ENCODE measurements at regions of chr13 and their contacts with region 1.

Region 1: GRCh38 chr13:20049558-20050473 is 91.3 kb downstream of the ZMYM2 start:
- DNase-seq: no peak
- H3K4me3 Mint-ChIP-seq: peak overlapping the region; percentile 37
- H3K27ac Mint-ChIP-seq: peak overlapping the region; percentile 26
- H3K4me1 Mint-ChIP-seq: peaks cover 22% of the 10 kb centered on the region
- H3K27me3 Mint-ChIP-seq: no peaks in the 10 kb centered on the region

Region 2: DNA sequence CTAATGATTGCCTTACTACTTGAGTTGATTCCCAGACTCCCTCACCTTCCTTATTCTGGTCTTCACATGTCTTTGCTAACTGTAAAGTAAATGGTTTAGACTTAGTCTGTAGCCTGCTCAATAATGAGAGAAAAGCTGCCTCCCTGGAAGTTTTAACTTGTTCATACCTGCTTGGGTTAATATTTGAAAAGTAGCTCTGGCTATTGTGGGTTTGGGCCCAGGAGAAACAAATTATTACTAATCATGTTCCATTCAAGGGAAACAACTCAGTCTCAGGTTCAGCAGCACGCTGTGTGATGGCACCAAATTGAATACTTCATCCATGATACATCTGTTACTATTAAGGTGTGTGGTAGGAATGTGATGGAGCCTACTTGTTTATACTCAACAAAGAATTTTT is 16.3 kb before region 1 on chr13:
- CTCF ChIA-PET with region 1: no interaction called
- intact Hi-C with region 1: loop called (anchors 2 kb)
- DNase-seq: no peak
- H3K4me3 Mint-ChIP-seq: no peak overlapping the region
- H3K27ac Mint-ChIP-seq: no peak overlapping the region
- H3K4me1 Mint-ChIP-seq: no peaks in the 10 kb centered on the region
- H3K27me3 Mint-ChIP-seq: no peaks in the 10 kb centered on the region

Region 3: DNA sequence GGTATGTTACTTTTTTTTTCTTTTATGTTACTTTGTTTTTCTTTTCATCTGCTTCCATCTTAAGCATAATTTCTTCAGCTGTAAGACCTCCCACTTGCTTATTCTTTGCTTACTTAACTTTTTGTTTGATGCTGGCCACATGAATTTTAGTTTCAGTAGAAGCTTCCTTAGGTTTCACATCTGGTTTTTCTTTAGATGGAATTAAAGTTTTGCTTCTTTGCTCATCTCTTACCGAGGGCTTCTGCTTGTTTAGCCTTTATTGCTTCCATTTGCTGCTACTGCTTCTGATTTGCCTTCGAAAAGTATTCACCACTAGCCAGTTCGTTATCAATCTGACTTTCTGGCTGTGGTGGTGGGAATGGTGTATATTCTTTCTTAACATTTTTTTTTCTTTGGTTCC is 20.1 kb after region 1 on chr13:
- CTCF ChIA-PET with region 1: no interaction called
- intact Hi-C with region 1: loop called (anchors 2 kb)
- DNase-seq: no peak
- H3K4me3 Mint-ChIP-seq: no peak overlapping the region
- H3K27ac Mint-ChIP-seq: no peak overlapping the region
- H3K4me1 Mint-ChIP-seq: no peaks in the 10 kb centered on the region
- H3K27me3 Mint-ChIP-seq: no peaks in the 10 kb centered on the region

Region 4: DNA sequence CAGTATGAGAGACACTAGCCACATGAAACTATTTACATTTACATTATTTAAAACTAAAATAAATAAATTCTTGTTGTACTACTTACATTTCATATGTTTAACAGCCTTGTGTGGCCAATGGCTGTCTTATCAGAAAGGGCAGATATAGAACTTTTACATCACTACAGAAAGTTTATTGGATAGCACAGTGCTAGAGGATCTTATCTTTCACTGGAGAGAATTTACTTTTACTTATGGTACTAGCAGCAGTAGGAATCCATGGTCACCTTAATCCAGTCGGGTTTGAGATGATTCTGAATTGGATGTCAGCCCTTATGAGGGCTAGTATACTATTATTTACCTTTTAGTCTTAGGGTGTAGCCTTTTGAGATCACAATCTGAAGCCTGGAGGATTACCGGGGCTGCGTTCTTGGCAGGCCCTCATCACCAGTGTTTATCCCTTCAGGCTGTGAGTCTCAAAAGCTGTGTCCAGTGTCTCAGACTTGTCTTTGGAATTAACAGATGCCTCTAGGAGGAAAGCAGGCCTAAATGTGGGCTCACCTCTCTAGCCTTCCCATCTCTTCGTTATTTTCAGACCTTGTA is 538.8 kb after region 1 on chr13:
- CTCF ChIA-PET with region 1: no interaction called
- intact Hi-C with region 1: no loop called
- DNase-seq: no peak
- H3K4me3 Mint-ChIP-seq: no peak overlapping the region
- H3K27ac Mint-ChIP-seq: no peak overlapping the region
- H3K4me1 Mint-ChIP-seq: no peaks in the 10 kb centered on the region
- H3K27me3 Mint-ChIP-seq: no peaks in the 10 kb centered on the region

Measured in activated naive CD4-positive, alpha-beta T cell treated with anti-CD3 and anti-CD28 coated beads for 36 hours (primary cell).